CD8-positive, alpha-beta T cell (primary cell): ENCODE measurements at regions of chr1 and their contacts with region 1.

Region 1: DNA sequence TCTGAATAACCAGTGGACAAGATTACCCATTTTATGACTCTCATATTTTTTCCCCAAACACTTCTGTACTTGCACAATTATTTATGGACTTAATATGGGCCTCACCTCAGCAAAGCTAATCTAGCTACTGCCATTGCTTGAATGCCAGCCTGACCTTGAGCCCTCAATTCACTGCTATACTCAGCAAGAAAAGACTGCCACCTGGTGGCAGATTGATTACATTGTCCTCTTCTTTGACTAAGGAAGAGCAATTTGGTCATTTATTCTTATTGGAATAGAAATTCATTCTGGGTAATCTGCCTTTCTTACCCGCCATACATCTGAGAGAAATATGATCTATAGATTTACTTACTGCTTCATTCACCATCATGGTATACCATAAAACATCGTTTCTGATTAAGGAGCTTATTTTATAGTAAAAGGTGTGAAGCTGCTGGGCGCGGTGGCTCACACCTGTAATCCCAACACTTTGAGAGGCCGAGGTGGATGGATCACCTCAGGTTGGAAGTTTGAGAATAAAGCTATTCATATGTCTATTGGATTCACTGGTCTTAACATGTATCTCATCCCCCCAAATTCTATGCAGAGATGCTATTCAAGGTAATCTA is 32.9 kb upstream of the DIPK1A start:
- DNase-seq: peak; percentile 30 to 90 (median 76)
- ATAC-seq: peak; percentile 91
- H3K4me3 ChIP-seq: no peak overlapping the region
- H3K4me3 Mint-ChIP-seq: no peak overlapping the region
- H3K27ac ChIP-seq: no peak overlapping the region
- H3K27ac Mint-ChIP-seq: peak overlapping the region; percentile 11
- H3K4me1 ChIP-seq: peaks cover 34% of the 10 kb centered on the region
- H3K4me1 Mint-ChIP-seq: peaks cover 45% of the 10 kb centered on the region
- H3K27me3 ChIP-seq: no peaks in the 10 kb centered on the region
- H3K27me3 Mint-ChIP-seq: no peaks in the 10 kb centered on the region
- CTCF ChIP-seq: peak; percentile 77

Region 2: DNA sequence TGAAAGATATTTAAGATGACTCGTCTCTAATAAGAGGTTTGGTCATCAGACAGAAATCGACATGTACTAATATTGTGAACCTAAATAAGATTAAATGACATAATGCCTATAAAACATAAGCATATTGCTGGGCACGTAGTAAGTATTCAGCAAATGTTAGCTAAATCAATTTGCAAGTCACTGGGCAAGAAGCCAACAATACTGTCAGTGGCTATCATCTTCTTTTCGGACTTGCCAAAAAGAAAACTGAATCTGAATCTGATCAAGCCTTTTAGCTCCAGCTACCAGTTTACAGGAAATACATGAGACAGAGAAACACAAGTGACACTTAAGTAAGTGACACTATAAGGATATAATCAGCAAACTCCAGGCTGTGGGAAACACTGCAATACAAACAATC is 116.4 kb before region 1 on chr1:
- CTCF ChIA-PET with region 1: interaction called, 25 read pairs
- POLR2A ChIA-PET with region 1: interaction called, 3 read pairs
- intact Hi-C with region 1: no loop called
- DNase-seq: peak in 2 of 9 experiments; percentile 40 to 59
- ATAC-seq: peak; percentile 29
- H3K4me3 ChIP-seq: peak overlapping the region in 1 of 2 experiments; percentile 13
- H3K4me3 Mint-ChIP-seq: peak overlapping the region; percentile 33
- H3K27ac ChIP-seq: peak overlapping the region in 1 of 2 experiments; percentile 67
- H3K27ac Mint-ChIP-seq: peak overlapping the region; percentile 88
- H3K4me1 ChIP-seq: peaks cover 20% of the 10 kb centered on the region
- H3K4me1 Mint-ChIP-seq: peaks cover 39% of the 10 kb centered on the region
- H3K27me3 ChIP-seq: no peaks in the 10 kb centered on the region
- H3K27me3 Mint-ChIP-seq: no peaks in the 10 kb centered on the region
- CTCF ChIP-seq: no peak

Region 3: DNA sequence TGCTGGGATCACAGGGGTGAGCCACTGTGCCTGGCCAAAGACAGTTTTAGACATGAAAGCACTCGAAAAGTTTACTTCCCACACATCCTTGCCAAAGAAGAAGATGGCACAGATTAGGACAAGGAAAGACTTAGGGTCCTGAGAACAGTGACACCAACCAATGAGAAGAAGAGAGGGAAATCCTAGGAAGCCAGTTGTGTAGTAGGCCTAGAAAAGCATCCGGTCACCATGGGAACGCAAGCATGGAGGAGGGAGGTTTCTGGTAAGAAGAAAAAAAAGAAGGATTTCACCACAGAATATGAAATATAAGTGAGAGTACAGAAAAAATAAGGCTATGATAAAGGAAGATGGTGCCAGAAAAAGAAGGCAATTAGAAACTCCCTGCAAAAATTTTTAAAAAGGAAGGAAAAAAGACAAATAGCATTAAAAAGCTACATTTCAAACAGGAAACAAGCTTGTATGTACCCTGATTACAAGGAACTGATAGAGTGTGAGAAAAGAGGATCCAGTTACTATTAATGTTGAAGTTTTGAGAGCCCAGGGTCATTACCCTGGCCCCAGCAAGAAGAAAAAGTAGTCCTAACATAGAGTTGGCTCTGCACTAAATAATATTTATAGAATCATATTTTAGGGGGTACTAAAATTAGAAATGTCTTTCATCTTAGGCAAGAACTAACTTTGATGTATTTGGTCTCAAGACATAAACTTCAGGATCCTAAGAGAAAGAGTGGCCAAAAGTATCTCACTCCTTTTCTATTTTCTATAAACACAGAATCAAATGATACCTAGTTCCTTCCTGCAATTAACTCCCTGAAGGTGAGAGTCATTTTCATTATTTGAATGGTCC is 49.1 kb before region 1 on chr1:
- CTCF ChIA-PET with region 1: interaction called, 18 read pairs
- POLR2A ChIA-PET with region 1: interaction called, 3 read pairs
- intact Hi-C with region 1: loop called (anchors 10 kb)
- DNase-seq: no peak
- ATAC-seq: no peak
- H3K4me3 ChIP-seq: no peak overlapping the region
- H3K4me3 Mint-ChIP-seq: no peak overlapping the region
- H3K27ac ChIP-seq: no peak overlapping the region
- H3K27ac Mint-ChIP-seq: no peak overlapping the region
- H3K4me1 ChIP-seq: peaks cover 29% of the 10 kb centered on the region
- H3K4me1 Mint-ChIP-seq: peaks cover 58% of the 10 kb centered on the region
- H3K27me3 ChIP-seq: no peaks in the 10 kb centered on the region
- H3K27me3 Mint-ChIP-seq: no peaks in the 10 kb centered on the region
- CTCF ChIP-seq: no peak

Region 4: GRCh38 chr1:92960395-92961130 is 33.6 kb before region 1 on chr1:
- CTCF ChIA-PET with region 1: interaction called, 217 read pairs
- POLR2A ChIA-PET with region 1: interaction called, 59 read pairs
- intact Hi-C with region 1: loop called (anchors 1 to 2 kb)
- DNase-seq: peak; percentile 40 to 90 (median 62)
- ATAC-seq: peak; percentile 41
- H3K4me3 ChIP-seq: peak overlapping the region; percentile 81 to 82
- H3K4me3 Mint-ChIP-seq: peak overlapping the region; percentile 92
- H3K27ac ChIP-seq: peak overlapping the region; percentile 85 to 87
- H3K27ac Mint-ChIP-seq: peak overlapping the region; percentile 96
- H3K4me1 ChIP-seq: peaks cover 57% of the 10 kb centered on the region
- H3K4me1 Mint-ChIP-seq: peaks cover 40% of the 10 kb centered on the region
- H3K27me3 ChIP-seq: no peaks in the 10 kb centered on the region
- H3K27me3 Mint-ChIP-seq: no peaks in the 10 kb centered on the region
- CTCF ChIP-seq: peak; percentile 58

Region 5: GRCh38 chr1:92975551-92976232 is 18.5 kb before region 1 on chr1:
- CTCF ChIA-PET with region 1: interaction called, 186 read pairs
- POLR2A ChIA-PET with region 1: interaction called, 10 read pairs
- intact Hi-C with region 1: no loop called
- DNase-seq: no peak
- ATAC-seq: no peak
- H3K4me3 ChIP-seq: no peak overlapping the region
- H3K4me3 Mint-ChIP-seq: no peak overlapping the region
- H3K27ac ChIP-seq: no peak overlapping the region
- H3K27ac Mint-ChIP-seq: peak overlapping the region; percentile 52
- H3K4me1 ChIP-seq: peaks cover 13% of the 10 kb centered on the region
- H3K4me1 Mint-ChIP-seq: peaks cover 31% of the 10 kb centered on the region
- H3K27me3 ChIP-seq: no peaks in the 10 kb centered on the region
- H3K27me3 Mint-ChIP-seq: no peaks in the 10 kb centered on the region
- CTCF ChIP-seq: no peak

Region 6: GRCh38 chr1:93061895-93062792 is 67.9 kb after region 1 on chr1:
- CTCF ChIA-PET with region 1: interaction called, 15 read pairs
- POLR2A ChIA-PET with region 1: interaction called, 3 read pairs
- intact Hi-C with region 1: no loop called
- DNase-seq: peak in 6 of 9 experiments; percentile 25 to 72 (median 37)
- ATAC-seq: peak; percentile 72
- H3K4me3 ChIP-seq: no peak overlapping the region
- H3K4me3 Mint-ChIP-seq: no peak overlapping the region
- H3K27ac ChIP-seq: no peak overlapping the region
- H3K27ac Mint-ChIP-seq: no peak overlapping the region
- H3K4me1 ChIP-seq: no peaks in the 10 kb centered on the region
- H3K4me1 Mint-ChIP-seq: peaks cover 4% of the 10 kb centered on the region
- H3K27me3 ChIP-seq: no peaks in the 10 kb centered on the region
- H3K27me3 Mint-ChIP-seq: peaks cover 12% of the 10 kb centered on the region
- CTCF ChIP-seq: peak; percentile 48